ENCODE measurements at regions of chr19 and their contacts with region 1.

Region 1: GRCh38 chr19:46840136-46840942 is 10.3 kb downstream of the AP2S1 start:
- DNase-seq: peak in 2 of 4 donors; percentile 71 to 87
- ATAC-seq: peak; percentile 89
- H3K4me3 ChIP-seq: no peak overlapping the region
- H3K27ac ChIP-seq: peak overlapping the region in 1 of 2 donors; percentile 28
- H3K4me1 ChIP-seq: peaks cover 0 to 7% of the 10 kb centered on the region in 2 donors
- H3K27me3 ChIP-seq: no peaks in the 10 kb centered on the region
- CTCF ChIP-seq: peak; percentile 56 to 69

Region 2: DNA sequence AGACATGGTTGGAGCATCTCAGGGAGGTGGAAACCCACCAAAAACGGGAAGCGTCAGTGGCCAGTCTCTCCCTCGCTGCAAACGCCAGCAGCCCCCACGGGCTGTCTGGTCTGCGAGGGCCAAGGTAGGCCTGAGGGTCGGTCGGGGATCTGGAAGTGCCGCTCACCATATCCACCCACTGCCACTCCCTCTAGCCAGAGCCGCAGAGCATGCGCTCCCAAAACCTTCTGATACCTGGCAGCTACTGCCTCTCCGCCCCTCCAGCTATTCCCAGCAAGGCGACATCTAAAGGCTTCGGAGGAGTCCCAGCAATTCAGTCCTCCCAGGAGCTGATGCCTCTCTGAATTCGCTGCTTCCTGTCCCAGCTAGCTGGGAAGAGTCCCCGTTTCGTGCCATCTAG is 98.9 kb before region 1 on chr19:
- intact Hi-C with region 1: no loop called
- DNase-seq: peak in 1 of 4 donors; percentile 39
- ATAC-seq: no peak
- H3K4me3 ChIP-seq: no peak overlapping the region
- H3K27ac ChIP-seq: no peak overlapping the region
- H3K4me1 ChIP-seq: peaks cover 5 to 70% of the 10 kb centered on the region in 2 donors
- H3K27me3 ChIP-seq: no peaks in the 10 kb centered on the region
- CTCF ChIP-seq: no peak

Region 3: DNA sequence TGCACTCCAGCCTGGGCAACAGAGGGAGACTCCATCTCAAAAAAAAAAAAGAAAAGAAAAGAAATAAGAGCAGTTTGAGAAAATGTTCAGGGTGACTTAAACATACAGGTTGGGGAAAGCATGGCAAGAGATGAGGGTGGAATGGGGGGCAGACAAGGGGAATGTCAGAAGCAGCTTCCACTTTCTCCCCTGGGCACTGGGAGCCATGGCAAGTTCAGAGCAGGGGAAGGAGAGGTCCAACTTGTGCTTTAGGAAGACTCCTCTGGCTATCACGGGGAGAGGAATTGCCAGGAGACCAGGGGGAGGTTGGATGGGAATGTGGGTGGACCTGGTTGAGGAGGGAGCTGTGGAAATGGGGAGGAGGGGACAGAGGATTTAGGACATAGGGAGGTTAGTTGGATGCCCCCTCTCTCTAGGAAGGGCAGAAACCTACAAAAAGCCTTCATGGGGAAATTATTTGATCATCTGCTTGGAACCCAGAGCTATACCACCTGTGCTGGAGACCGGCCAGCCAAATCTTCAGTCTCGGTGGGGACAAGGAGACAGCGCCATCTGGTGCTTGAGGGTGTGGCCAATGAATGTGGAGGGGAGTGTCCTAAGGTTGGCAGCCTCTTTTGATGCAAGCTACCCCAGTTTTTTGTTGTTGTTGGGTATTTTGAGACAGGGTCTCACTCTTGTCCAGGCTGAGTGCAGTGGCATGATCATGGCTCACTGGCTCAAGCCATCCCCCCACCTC is 86.8 kb before region 1 on chr19:
- intact Hi-C with region 1: loop called (anchors 5 to 10 kb)
- DNase-seq: peak in 2 of 4 donors; percentile 50 to 76
- ATAC-seq: peak; percentile 52
- H3K4me3 ChIP-seq: no peak overlapping the region
- H3K27ac ChIP-seq: no peak overlapping the region
- H3K4me1 ChIP-seq: peaks cover 8 to 25% of the 10 kb centered on the region in 2 donors
- H3K27me3 ChIP-seq: no peaks in the 10 kb centered on the region
- CTCF ChIP-seq: peak; percentile 16 to 38

Region 4: GRCh38 chr19:46759817-46760333 is 80.5 kb before region 1 on chr19:
- intact Hi-C with region 1: loop called (anchors 5 to 10 kb)
- DNase-seq: no peak
- ATAC-seq: peak; percentile 5
- H3K4me3 ChIP-seq: no peak overlapping the region
- H3K27ac ChIP-seq: no peak overlapping the region
- H3K4me1 ChIP-seq: peaks cover 6 to 29% of the 10 kb centered on the region in 2 donors
- H3K27me3 ChIP-seq: no peaks in the 10 kb centered on the region
- CTCF ChIP-seq: no peak